IMR-90 (cell line): ENCODE measurements at regions of chr1 and their contacts with region 1.

Region 1: DNA sequence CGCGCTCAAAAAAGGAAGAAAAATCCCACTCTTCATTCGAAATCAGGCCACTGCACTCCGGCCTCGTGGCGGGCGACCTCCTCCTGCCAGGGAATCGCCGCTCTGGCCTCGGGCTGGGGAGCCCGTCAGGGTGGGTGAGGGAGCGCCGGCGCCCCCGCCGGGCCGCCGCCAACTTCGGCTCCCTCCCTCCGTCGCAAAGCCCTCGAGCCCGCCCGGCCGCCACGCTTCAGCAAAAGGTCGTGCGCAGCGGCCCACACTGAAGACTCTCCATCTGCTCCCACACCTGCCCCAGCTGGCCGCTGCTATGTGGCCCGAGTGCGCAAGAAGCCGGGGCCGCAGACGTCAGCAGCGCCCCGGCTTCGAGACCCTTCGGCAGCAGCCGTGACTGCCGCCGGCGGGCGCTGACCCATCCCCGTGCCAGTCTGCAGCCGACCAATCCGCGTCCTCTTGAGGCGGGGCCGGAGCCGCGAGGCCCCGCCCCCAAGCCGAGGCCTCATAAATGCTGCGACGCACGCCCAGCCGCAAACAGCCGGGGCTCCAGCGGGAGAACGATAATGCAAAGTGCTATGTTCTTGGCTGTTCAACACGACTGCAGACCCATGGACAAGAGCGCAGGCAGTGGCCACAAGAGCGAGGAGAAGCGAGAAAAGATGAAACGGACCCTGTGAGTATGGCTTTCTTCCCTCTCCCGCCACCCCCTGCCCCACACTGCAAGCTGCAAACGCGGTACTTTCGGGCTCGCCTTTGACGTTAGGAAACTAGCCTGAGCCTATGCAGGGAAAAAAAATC is at the start of gene RGS2:
- DNase-seq: peak; percentile 95
- ATAC-seq: peak; percentile 95
- H3K4me3 ChIP-seq: peak within 1 kb of the TSS; percentile 73
- H3K27ac ChIP-seq: peak within 1 kb of the TSS; percentile 75
- H3K4me1 ChIP-seq: peaks cover 4% of the 10 kb centered on the region
- H3K27me3 ChIP-seq: no peaks in the 10 kb centered on the region
- CTCF ChIP-seq: peak; percentile 25; the same call in 1 of the 2 replicates
- POLR2A ChIP-seq: peak; percentile 99
- RAD21 ChIP-seq: peak; percentile 14; the same call in 1 of the 2 replicates
- total RNA-seq, gene RGS2: 19.7 and 25.0 TPM in 2 replicates

Region 2: DNA sequence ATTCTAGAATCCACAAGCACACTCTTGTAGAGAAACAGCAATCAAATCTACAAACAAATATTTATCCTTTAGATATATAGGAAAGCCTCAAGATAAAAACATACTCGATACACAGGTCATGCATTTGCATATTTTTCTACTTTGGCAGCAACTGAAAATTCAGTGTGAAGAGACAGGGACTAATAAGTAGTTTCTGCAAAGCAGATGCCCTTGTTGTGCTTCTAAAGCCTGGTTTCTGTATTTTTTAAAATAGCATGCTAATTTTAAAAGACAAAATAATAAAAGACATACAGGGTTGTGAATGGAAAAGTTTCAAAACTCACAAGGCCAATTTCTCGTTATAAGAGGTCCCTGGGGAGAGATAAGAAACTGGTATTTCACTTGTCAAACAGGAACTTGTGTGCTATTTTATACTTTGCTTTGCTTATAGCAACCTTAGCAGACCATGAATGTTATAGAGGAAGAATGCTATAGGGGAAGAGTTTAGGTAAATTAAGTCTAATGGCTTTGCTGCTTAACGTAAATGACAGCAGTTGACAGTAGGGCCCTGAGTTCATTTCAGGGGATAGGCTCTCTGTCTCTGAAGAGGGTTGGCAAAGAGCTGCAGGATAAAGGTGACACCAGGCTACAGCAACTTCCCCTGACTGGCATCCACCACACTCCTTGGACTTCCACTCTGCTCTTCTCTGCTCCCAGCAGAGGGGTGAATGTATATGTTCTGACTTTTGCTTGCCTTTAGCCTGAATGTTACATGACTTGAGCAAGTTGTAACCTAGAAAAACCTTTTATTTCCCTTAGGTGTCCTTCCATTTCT is 182.1 kb before region 1 on chr1:
- CTCF ChIA-PET with region 1: no interaction called
- POLR2A ChIA-PET with region 1: no interaction called
- dilution Hi-C with region 1: no loop called
- in situ Hi-C with region 1: no loop called
- intact Hi-C with region 1: loop called (anchors 2 kb)
- DNase-seq: no peak
- ATAC-seq: no peak
- H3K4me3 ChIP-seq: no peak overlapping the region
- H3K27ac ChIP-seq: no peak overlapping the region
- H3K4me1 ChIP-seq: no peaks in the 10 kb centered on the region; the same call in 1 of the 2 replicates
- H3K27me3 ChIP-seq: no peaks in the 10 kb centered on the region
- CTCF ChIP-seq: no peak
- POLR2A ChIP-seq: no peak
- RAD21 ChIP-seq: no peak

Region 3: DNA sequence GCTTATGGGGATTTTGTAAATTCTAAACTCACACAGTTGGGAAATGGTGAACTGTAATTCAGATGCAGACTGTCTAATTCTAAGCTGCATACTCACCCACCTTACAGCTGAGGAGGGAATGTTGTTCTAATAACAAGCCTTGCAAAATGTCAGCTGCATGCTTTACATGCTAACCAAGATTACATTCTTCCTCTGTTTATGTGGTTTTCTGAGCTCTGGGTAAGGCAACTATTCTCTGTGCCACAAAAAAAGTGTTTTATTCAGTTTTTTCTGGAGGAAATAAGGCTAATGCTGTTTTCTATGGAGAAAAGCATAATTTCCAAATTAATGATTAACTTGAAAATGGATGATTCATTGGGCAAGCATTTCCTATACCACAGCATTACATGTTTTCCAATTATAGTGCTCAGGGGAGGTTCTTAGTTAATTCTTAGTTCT is 107.9 kb before region 1 on chr1:
- CTCF ChIA-PET with region 1: interaction called, 4 read pairs
- POLR2A ChIA-PET with region 1: interaction called, 4 read pairs
- dilution Hi-C with region 1: no loop called
- in situ Hi-C with region 1: no loop called
- intact Hi-C with region 1: loop called (anchors 2 kb)
- DNase-seq: peak; percentile 95
- ATAC-seq: peak; percentile 96
- H3K4me3 ChIP-seq: no peak overlapping the region
- H3K27ac ChIP-seq: peak overlapping the region; percentile 66; the same call in 1 of the 2 replicates
- H3K4me1 ChIP-seq: peaks cover 8% of the 10 kb centered on the region
- H3K27me3 ChIP-seq: no peaks in the 10 kb centered on the region
- CTCF ChIP-seq: no peak
- POLR2A ChIP-seq: no peak
- RAD21 ChIP-seq: no peak

Region 4: GRCh38 chr1:193019442-193020026 is 210.8 kb after region 1 on chr1:
- CTCF ChIA-PET with region 1: interaction called, 16 read pairs
- POLR2A ChIA-PET with region 1: interaction called, 3 read pairs
- dilution Hi-C with region 1: loop called (anchors 25 kb)
- in situ Hi-C with region 1: loop called (anchors 5 kb)
- intact Hi-C with region 1: loop called (anchors 1 kb)
- DNase-seq: peak; percentile 64
- ATAC-seq: peak; percentile 66
- H3K4me3 ChIP-seq: no peak overlapping the region
- H3K27ac ChIP-seq: no peak overlapping the region
- H3K4me1 ChIP-seq: no peaks in the 10 kb centered on the region
- H3K27me3 ChIP-seq: no peaks in the 10 kb centered on the region
- CTCF ChIP-seq: peak; percentile 59
- POLR2A ChIP-seq: no peak
- RAD21 ChIP-seq: peak; percentile 74

Region 5: DNA sequence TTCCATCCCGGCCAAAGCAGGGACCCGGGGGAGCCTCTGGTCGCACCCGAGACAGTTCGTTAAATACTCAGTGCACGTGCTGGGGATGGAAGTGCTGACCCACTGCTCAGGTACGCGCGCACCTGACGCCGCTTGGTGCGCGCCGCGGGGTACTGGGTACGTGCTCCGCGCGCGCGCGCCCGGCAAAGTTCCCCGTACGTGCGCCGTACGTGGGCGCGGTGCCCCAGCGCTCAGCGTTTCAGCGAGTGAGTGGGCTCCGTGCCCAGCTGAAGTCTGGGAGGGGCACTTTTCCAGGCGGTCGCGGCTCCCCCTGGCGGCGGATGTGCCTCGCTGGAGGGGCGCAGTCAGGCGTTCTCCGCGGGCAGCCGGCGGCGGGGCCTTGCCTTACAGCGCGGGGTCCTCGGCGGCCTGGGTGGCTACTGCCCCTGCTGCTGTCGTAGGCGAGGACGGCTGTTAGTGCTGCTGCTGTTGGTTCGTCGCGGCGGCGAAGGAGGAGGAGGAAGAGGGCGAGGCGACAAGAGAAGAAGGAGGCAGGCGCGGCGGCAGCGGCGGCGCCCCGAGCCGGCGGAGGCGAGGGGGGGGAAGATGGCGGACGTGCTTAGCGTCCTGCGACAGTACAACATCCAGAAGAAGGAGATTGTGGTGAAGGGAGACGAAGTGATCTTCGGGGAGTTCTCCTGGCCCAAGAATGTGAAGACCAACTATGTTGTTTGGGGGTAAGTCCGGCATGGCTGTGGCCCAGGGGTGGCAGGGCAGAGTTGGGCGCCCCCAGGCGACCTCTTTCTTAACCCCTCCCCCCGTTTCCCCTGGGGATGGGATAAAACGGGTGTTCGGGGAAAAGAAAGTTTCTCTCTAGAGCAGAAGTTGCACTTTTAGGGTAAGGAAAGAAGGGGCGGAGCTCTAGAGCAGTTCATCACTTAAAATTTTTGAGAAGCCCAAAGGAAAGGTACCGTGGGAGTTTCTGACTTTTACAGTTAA is 313.2 kb after region 1 on chr1 and contains the start of gene CDC73:
- CTCF ChIA-PET with region 1: no interaction called
- POLR2A ChIA-PET with region 1: no interaction called
- dilution Hi-C with region 1: no loop called
- in situ Hi-C with region 1: no loop called
- intact Hi-C with region 1: loop called (anchors 5 kb)
- DNase-seq: peak; percentile 95
- ATAC-seq: peak; percentile 97
- H3K4me3 ChIP-seq: peak within 1 kb of the TSS; percentile 71
- H3K27ac ChIP-seq: peak within 1 kb of the TSS; percentile 89
- H3K4me1 ChIP-seq: no peaks in the 10 kb centered on the region
- H3K27me3 ChIP-seq: no peaks in the 10 kb centered on the region
- CTCF ChIP-seq: peak; percentile 98
- POLR2A ChIP-seq: peak; percentile 91
- RAD21 ChIP-seq: peak; percentile 86
- total RNA-seq, gene CDC73: 29.6 and 44.7 TPM in 2 replicates

Region 6: GRCh38 chr1:193338194-193338593 is 529.5 kb after region 1 on chr1:
- CTCF ChIA-PET with region 1: no interaction called
- POLR2A ChIA-PET with region 1: no interaction called
- dilution Hi-C with region 1: no loop called
- in situ Hi-C with region 1: no loop called
- intact Hi-C with region 1: loop called (anchors 10 kb)
- DNase-seq: peak; percentile 64
- ATAC-seq: peak; percentile 21
- H3K4me3 ChIP-seq: no peak overlapping the region
- H3K27ac ChIP-seq: peak overlapping the region; percentile 4; the same call in 1 of the 2 replicates
- H3K4me1 ChIP-seq: peaks cover 11% of the 10 kb centered on the region
- H3K27me3 ChIP-seq: no peaks in the 10 kb centered on the region
- CTCF ChIP-seq: peak; percentile 28; the same call in 1 of the 2 replicates
- POLR2A ChIP-seq: no peak
- RAD21 ChIP-seq: peak; percentile 34